Right cardiac atrium (tissue), 5 donors: ENCODE measurements at regions of chr4 and their contacts with region 1.

Region 1: DNA sequence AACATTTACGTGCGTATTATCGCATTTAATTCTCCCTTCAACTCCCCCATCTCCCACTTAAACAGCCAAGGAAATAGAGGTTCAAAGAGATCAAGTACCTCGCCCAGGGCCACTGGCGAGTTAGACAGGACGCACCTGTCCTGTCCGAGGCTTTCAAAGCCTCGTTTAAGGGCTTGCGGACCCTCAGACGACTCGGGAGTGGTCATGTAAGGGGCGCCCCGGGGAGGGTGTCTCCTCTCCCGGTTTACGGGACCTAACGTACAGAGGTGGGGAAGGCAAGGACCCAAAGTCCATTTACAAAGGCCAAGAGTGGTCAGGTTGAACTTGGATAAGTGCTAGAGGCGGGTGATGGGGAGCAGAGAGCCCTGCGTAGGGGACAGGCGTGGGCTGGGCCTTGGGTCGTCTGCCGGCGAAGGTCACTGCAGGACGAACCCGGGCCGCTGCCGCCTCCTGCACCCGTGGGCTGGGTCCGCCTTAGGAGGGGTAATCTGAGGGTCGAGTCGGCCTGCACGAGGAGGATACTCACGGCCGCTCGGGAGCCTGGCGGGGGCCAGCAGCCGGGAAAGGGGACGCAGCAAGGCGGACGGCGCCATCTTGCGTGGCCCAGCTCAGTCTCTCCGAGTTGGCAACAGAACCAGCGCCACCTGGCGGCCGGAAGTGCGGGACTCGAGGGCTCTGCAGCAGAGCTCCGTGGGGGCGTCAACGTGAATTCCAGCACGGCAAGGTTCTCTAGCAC is 5.9 kb upstream of the NAA15 start:
- DNase-seq: peak; percentile 98 to 100 (median 99)
- ATAC-seq: peak; percentile 98
- H3K4me3 ChIP-seq: peak overlapping the region; percentile 86
- H3K27ac ChIP-seq: peak overlapping the region; percentile 61
- H3K4me1 ChIP-seq: peaks cover 2% of the 10 kb centered on the region
- H3K27me3 ChIP-seq: no peaks in the 10 kb centered on the region

Region 2: DNA sequence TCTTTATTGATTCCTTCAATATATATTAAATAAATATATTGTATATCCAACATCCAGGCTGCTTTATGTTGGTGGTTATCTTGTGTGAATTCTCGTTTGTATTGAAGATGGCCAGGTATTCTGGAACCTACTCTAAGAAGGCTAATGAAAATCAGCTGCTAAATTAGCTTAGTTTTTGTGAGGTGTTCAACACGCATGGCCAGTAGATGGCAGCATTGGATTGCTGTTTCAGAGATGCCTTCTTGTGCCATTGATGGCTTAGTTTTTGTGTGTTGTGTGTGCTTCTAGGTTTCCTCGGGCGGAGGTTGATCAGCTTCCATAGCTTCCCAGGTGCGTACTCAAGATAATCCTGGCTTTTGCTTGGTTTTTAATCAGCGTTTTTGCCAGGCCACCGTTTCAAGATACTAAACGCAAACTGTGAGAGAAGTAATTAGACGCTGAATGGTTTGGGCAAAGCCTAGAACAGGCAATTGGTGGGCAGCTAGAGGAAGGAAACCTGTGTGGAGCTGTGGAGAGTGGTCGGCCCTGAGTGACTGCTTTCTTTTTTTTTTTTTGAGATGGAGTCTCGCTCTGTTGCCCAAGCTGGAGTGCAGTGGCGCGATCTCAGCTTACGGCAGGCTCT is 264.6 kb before region 1 on chr4:
- intact Hi-C with region 1: loop called in 2 of 4 experiments (anchors 5 to 10 kb)
- DNase-seq: peak in 2 of 3 donors; percentile 43 to 53
- ATAC-seq: peak; percentile 44 to 55
- H3K4me3 ChIP-seq: no peak overlapping the region
- H3K27ac ChIP-seq: no peak overlapping the region
- H3K4me1 ChIP-seq: peaks cover 3% of the 10 kb centered on the region
- H3K27me3 ChIP-seq: no peaks in the 10 kb centered on the region

Region 3: GRCh38 chr4:139083956-139084803 is 211.2 kb before region 1 on chr4:
- intact Hi-C with region 1: loop called in 1 of 4 experiments (anchors 10 kb)
- DNase-seq: peak; percentile 89 to 96 (median 95)
- ATAC-seq: peak; percentile 86 to 87
- H3K4me3 ChIP-seq: peak overlapping the region; percentile 92
- H3K27ac ChIP-seq: peak overlapping the region; percentile 85
- H3K4me1 ChIP-seq: no peaks in the 10 kb centered on the region
- H3K27me3 ChIP-seq: no peaks in the 10 kb centered on the region

Region 4: DNA sequence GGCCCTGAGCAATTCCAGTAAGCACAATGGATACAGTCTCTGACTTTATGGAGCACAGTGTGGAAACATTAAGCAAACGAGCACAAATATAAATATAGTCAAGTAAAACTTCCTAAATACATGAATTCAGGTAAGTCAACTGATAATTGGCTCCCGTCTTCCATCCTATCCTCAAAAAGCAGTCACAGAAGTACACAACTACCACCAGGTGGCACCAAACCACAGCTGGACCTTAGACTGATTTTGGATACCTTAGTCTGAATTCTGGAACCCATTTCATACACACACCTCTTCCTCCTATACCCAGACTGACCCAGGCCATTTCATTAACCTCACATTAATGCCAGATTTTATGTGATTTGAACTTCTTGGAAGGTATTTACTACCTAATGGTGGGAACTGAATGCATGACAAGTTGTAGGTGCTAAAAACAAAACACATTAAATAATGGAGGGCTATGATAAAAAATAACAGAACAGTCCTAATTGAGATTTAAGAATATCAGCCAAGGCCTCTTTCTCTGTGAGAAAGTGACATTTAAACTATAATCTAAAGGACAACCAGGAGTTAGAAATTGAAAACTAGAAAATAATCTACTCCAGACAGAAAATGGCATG is 195.9 kb before region 1 on chr4:
- intact Hi-C with region 1: loop called in 1 of 4 experiments (anchors 10 kb)
- DNase-seq: peak in 2 of 3 donors; percentile 62 to 69
- ATAC-seq: peak; percentile 75 to 85
- H3K4me3 ChIP-seq: no peak overlapping the region
- H3K27ac ChIP-seq: no peak overlapping the region
- H3K4me1 ChIP-seq: no peaks in the 10 kb centered on the region
- H3K27me3 ChIP-seq: no peaks in the 10 kb centered on the region

Region 5: DNA sequence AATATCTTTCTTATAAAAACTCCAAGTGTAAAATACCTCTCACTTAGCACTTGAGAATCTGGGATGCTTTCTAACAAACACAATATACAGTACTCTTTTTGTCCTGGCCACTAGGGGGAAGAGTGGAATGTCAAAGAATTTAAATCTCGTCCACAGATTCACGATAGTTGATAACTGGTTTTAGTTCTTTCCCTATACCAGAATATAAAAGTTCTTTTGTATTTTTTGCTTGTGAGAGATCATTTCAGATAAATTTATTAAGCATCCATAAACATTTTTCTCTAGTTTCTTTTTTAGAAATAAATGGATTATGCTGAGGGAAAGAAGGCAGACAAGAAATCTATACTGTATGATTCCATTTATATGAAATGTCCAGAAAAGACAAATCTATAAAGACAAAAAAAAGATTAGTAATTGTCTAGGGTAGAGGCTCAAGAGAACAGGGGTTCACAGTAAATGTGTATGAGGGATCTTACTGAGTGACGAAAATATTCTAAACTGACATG is 65.8 kb before region 1 on chr4:
- intact Hi-C with region 1: loop called in 1 of 4 experiments (anchors 5 kb)
- DNase-seq: no peak
- ATAC-seq: peak; percentile 54 to 61
- H3K4me3 ChIP-seq: no peak overlapping the region
- H3K27ac ChIP-seq: no peak overlapping the region
- H3K4me1 ChIP-seq: no peaks in the 10 kb centered on the region
- H3K27me3 ChIP-seq: no peaks in the 10 kb centered on the region

Region 6: DNA sequence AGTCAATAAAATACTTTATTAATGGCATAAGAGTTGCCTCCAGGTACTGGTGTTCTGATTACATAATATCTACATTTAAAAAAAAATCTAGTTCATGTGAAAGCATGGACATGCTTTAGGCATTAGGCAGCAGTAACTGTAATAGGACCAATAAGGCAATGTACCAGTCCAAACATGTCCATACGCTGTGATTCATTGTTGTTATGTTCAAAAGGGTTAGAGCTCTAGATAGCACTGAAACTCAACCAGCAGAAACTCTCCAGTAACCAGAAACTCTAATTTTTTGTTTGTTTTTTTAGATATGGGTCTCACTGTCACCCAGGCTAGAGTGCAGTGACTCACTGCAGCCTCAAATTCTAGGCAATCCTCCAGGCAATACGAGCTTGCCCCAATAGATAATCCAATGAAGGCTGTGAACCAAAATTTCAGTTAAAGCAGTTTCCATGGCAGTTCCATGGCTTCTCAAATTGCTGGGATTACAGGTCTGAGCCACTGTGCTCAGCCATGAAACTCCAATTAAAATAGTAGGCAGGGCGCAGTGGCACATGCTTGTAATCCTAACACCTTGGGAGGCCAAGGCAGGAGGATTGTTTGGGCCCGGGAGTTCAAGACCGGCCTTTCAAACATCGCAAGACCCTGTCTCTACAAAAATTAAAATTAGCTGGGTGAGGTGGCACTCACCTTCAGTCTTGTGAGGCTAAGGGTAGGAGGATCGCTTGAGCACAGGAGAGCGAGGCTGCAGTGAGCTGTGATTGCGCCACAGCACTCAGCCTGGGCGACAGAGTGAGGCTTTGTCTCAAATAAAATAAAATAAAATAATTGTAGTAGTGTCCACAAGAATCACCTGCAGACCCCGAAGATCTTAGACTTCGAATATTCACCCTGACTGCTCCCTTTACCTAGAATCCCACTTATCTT is 51.7 kb before region 1 on chr4:
- intact Hi-C with region 1: no loop called
- DNase-seq: peak in 1 of 3 donors; percentile 45
- ATAC-seq: peak; percentile 86 to 87
- H3K4me3 ChIP-seq: no peak overlapping the region
- H3K27ac ChIP-seq: no peak overlapping the region
- H3K4me1 ChIP-seq: peaks cover 3% of the 10 kb centered on the region
- H3K27me3 ChIP-seq: no peaks in the 10 kb centered on the region